Mammary epithelial cell (primary cell): ENCODE measurements at regions of chrX and their contacts with region 1.

Region 1: DNA sequence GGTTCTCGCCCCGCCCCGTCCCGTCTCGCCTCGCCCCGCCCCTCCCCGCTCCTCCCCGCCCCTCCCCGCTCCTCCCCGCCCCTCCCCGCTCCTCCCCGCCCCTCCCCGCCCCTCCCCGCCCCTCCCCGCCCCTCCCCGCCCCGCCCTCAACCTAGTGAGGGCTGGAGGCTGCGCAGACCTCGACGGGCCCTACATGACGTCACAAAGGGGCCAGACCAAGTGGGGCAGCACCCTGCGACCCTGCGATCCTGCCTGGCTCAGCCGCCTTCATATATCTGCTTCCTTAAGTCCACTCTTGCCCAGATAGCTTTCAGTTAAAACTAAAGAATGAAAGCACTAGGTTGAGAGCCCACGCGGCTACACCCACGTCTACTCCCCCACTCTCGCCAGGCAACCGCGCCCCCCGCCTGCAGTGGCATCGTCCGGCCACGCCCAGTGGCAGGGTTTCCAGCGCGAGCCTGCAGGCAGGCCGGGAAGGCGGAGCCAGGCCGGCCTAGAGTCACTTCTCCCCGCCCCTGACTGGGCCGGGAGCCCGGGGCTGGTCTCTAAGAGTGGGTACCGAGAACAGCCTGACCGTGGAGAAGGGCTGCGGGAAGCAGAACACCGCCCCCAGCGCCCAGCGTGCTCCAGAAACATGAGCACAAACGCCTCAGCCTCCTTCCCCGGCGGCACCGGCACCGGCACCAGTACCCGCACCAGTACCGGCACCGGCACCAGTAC is 1.5 kb upstream of the MAOA start:
- DNase-seq: peak; percentile 87
- H3K4me3 ChIP-seq: peak overlapping the region; percentile 42 to 71 (median 71)
- H3K27ac ChIP-seq: peak overlapping the region; percentile 88
- H3K4me1 ChIP-seq: peaks cover 2% of the 10 kb centered on the region
- H3K27me3 ChIP-seq: no peaks in the 10 kb centered on the region
- CTCF ChIP-seq: peak in 1 of 2 donors; percentile 43

Region 2: GRCh38 chrX:43349363-43349762 is 305.2 kb before region 1 on chrX:
- CTCF ChIA-PET with region 1: interaction called, 3 read pairs
- dilution Hi-C with region 1: no loop called
- in situ Hi-C with region 1: no loop called
- intact Hi-C with region 1: loop called (anchors 5 kb)
- DNase-seq: peak; percentile 32
- H3K4me3 ChIP-seq: no peak overlapping the region
- H3K27ac ChIP-seq: no peak overlapping the region
- H3K4me1 ChIP-seq: no peaks in the 10 kb centered on the region
- H3K27me3 ChIP-seq: peaks cover 8% of the 10 kb centered on the region
- CTCF ChIP-seq: peak; percentile 86 to 93

Region 3: GRCh38 chrX:43514820-43515219 is 139.8 kb before region 1 on chrX:
- CTCF ChIA-PET with region 1: no interaction called
- dilution Hi-C with region 1: no loop called
- in situ Hi-C with region 1: no loop called
- intact Hi-C with region 1: no loop called
- DNase-seq: no peak
- H3K4me3 ChIP-seq: no peak overlapping the region
- H3K27ac ChIP-seq: no peak overlapping the region
- H3K4me1 ChIP-seq: no peaks in the 10 kb centered on the region
- H3K27me3 ChIP-seq: peaks cover 5% of the 10 kb centered on the region
- CTCF ChIP-seq: no peak

Region 4: GRCh38 chrX:43581888-43582515 is 72.6 kb before region 1 on chrX:
- CTCF ChIA-PET with region 1: no interaction called
- dilution Hi-C with region 1: no loop called
- in situ Hi-C with region 1: loop called in 1 of 2 experiments (anchors 5 kb)
- intact Hi-C with region 1: loop called (anchors 2 kb)
- DNase-seq: peak; percentile 73
- H3K4me3 ChIP-seq: no peak overlapping the region
- H3K27ac ChIP-seq: peak overlapping the region; percentile 72
- H3K4me1 ChIP-seq: peaks cover 27% of the 10 kb centered on the region
- H3K27me3 ChIP-seq: no peaks in the 10 kb centered on the region
- CTCF ChIP-seq: no peak

Region 5: DNA sequence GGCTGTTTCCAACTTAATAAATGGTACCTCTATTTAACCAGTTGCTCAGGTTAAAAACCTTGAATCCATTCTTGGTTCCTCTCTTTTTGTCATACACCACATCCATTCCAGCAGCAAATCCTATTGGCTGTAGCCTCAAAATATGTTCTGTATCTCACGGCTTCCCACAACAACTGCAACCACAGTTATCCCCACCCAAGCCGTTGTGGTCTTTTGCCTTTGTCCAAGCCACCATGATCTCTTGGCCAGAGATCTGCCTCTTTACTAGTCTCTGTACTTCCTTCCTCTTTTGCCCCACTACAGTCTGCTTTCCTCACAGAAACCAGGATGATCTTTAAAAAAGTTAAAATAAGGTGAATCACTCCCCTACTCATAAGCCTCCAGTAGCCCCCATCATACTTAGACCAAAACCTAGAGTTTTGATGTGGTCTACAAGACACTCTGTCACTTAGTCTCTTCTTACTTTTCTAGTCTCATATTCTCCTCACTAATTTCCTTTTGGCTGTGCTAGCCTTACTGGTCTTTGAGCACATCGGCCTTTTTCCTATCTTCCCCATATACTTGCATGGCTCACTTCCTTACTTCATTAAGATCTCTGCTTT is 11.8 kb after region 1 on chrX:
- CTCF ChIA-PET with region 1: no interaction called
- dilution Hi-C with region 1: no loop called
- in situ Hi-C with region 1: no loop called
- intact Hi-C with region 1: no loop called
- DNase-seq: no peak
- H3K4me3 ChIP-seq: no peak overlapping the region
- H3K27ac ChIP-seq: no peak overlapping the region
- H3K4me1 ChIP-seq: no peaks in the 10 kb centered on the region
- H3K27me3 ChIP-seq: no peaks in the 10 kb centered on the region
- CTCF ChIP-seq: no peak

Region 6: DNA sequence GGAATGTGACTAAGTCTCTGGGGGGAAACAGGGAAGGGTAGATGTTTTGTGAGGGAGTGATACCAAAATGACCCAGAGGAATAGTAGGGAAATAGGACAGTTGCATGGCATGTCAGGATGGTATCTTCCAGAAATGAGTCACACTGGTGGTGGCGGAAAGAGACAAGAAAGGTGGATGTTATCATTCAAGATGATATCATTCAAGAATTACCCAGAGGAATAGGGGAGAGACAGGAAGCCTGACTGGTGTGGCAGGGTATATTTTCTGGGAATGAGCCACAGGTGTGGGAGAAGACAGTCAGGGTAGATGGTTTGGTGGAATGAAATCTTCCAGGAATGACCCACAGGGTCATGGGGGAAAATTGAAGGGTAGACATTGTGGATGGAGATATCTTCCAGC is 62.6 kb after region 1 on chrX:
- CTCF ChIA-PET with region 1: no interaction called
- dilution Hi-C with region 1: no loop called
- in situ Hi-C with region 1: no loop called
- intact Hi-C with region 1: loop called (anchors 2 kb)
- DNase-seq: peak; percentile 78
- H3K4me3 ChIP-seq: no peak overlapping the region
- H3K27ac ChIP-seq: peak overlapping the region; percentile 76
- H3K4me1 ChIP-seq: peaks cover 42% of the 10 kb centered on the region
- H3K27me3 ChIP-seq: no peaks in the 10 kb centered on the region
- CTCF ChIP-seq: no peak

Region 7: GRCh38 chrX:44872817-44873414 is 1218.3 kb after region 1 on chrX and contains the start of gene KDM6A:
- CTCF ChIA-PET with region 1: no interaction called
- dilution Hi-C with region 1: no loop called
- in situ Hi-C with region 1: no loop called
- intact Hi-C with region 1: loop called (anchors 5 kb)
- DNase-seq: peak; percentile 99
- H3K4me3 ChIP-seq: peak within 1 kb of the TSS; percentile 78 to 100 (median 83)
- H3K27ac ChIP-seq: peak within 1 kb of the TSS; percentile 92
- H3K4me1 ChIP-seq: peaks cover 8% of the 10 kb centered on the region
- H3K27me3 ChIP-seq: no peaks in the 10 kb centered on the region
- CTCF ChIP-seq: no peak
- total RNA-seq, gene KDM6A: 45.4 to 46.8 TPM